ENCODE measurements at regions of chr12 and their contacts with region 1.

Region 1: GRCh38 chr12:123580772-123581171 is 3.6 kb upstream of the TMED2 start:
- DNase-seq: no peak
- ATAC-seq: no peak
- H3K4me3 Mint-ChIP-seq: no peak overlapping the region
- H3K27ac Mint-ChIP-seq: no peak overlapping the region
- H3K4me1 Mint-ChIP-seq: peaks cover 18% of the 10 kb centered on the region
- H3K27me3 Mint-ChIP-seq: no peaks in the 10 kb centered on the region

Region 2: GRCh38 chr12:123043536-123044001 is 537.2 kb before region 1 on chr12:
- CTCF ChIA-PET with region 1: interaction called, 3 read pairs
- POLR2A ChIA-PET with region 1: no interaction called
- intact Hi-C with region 1: loop called in 1 of 2 experiments (anchors 2 kb)
- DNase-seq: peak; percentile 89
- ATAC-seq: peak; percentile 97
- H3K4me3 Mint-ChIP-seq: no peak overlapping the region
- H3K27ac Mint-ChIP-seq: peak overlapping the region; percentile 47
- H3K4me1 Mint-ChIP-seq: peaks cover 28% of the 10 kb centered on the region
- H3K27me3 Mint-ChIP-seq: no peaks in the 10 kb centered on the region

Region 3: GRCh38 chr12:123427036-123427769 is 153.6 kb before region 1 on chr12:
- CTCF ChIA-PET with region 1: interaction called, 4 read pairs
- POLR2A ChIA-PET with region 1: no interaction called
- intact Hi-C with region 1: loop called in 1 of 2 experiments (anchors 5 kb)
- DNase-seq: peak; percentile 53
- ATAC-seq: peak; percentile 79
- H3K4me3 Mint-ChIP-seq: peak overlapping the region; percentile 40
- H3K27ac Mint-ChIP-seq: peak overlapping the region; percentile 84
- H3K4me1 Mint-ChIP-seq: peaks cover 35% of the 10 kb centered on the region
- H3K27me3 Mint-ChIP-seq: no peaks in the 10 kb centered on the region

Region 4: GRCh38 chr12:123533672-123534643 is 46.8 kb before region 1 on chr12 and contains the start of gene RILPL1:
- CTCF ChIA-PET with region 1: interaction called, 5 read pairs
- POLR2A ChIA-PET with region 1: no interaction called
- intact Hi-C with region 1: loop called (anchors 1 to 5 kb)
- DNase-seq: peak; percentile 63
- ATAC-seq: peak; percentile 64
- H3K4me3 Mint-ChIP-seq: peak within 1 kb of the TSS; percentile 78
- H3K27ac Mint-ChIP-seq: peak within 1 kb of the TSS; percentile 74
- H3K4me1 Mint-ChIP-seq: peaks cover 23% of the 10 kb centered on the region
- H3K27me3 Mint-ChIP-seq: peaks cover 3% of the 10 kb centered on the region
- total RNA-seq, gene RILPL1: 4.7 to 5.3 TPM

Region 5: DNA sequence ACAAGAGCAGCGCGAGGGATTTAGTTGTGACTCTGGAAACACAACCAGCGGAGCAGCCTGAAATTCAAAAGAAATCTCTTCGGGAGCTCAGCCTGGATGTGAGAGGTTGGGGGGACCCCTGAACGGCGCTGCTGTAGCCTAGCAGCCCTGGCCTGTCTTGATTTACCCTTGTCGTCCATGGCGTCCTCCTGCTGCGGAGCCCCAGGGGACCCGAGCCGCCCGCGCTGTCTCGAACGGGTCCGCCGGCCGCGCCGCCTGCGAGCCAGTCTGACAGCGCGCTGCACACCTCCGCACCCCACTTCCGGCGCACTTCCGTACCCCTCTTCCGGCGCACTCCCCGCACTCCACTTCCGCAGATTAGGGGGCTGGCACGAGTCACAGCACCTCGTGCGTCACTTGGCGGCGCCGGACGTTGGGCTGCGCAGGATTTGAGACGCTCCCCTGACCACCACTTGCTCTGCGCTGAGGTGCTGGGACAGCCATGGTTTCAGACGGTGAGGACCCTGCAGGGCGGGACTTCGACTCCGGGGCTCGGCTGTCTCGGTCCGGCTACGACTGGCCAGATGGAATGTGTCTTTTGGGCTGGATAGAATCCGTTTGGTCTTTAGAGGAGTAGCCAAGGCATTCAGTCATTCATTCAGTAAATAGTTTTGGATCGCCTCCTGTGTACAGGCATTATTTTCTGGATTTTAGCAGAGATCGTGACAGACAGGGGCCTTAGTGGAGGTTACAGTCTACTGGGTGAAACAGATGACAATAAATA is 52.8 kb after region 1 on chr12 and contains the starts of genes EIF2B1 and GTF2H3:
- CTCF ChIA-PET with region 1: no interaction called
- POLR2A ChIA-PET with region 1: no interaction called
- intact Hi-C with region 1: loop called (anchors 1 kb)
- DNase-seq: peak; percentile 99
- ATAC-seq: peak; percentile 97
- H3K4me3 Mint-ChIP-seq: peak within 1 kb of the TSS; percentile 93
- H3K27ac Mint-ChIP-seq: peak within 1 kb of the TSS; percentile 96
- H3K4me1 Mint-ChIP-seq: peaks cover 19% of the 10 kb centered on the region
- H3K27me3 Mint-ChIP-seq: no peaks in the 10 kb centered on the region
- total RNA-seq, gene EIF2B1: 52.7 to 61.0 TPM
- total RNA-seq, gene GTF2H3: 60.4 to 77.1 TPM

Region 6: GRCh38 chr12:123972457-123973401 is 392.0 kb after region 1 on chr12 and contains the starts of genes CCDC92 and ZNF664:
- CTCF ChIA-PET with region 1: no interaction called
- POLR2A ChIA-PET with region 1: no interaction called
- intact Hi-C with region 1: loop called in 1 of 2 experiments (anchors 1 kb)
- DNase-seq: peak; percentile 98
- ATAC-seq: peak; percentile 87
- H3K4me3 Mint-ChIP-seq: peak within 1 kb of the TSS; percentile 87
- H3K27ac Mint-ChIP-seq: peak within 1 kb of the TSS; percentile 89
- H3K4me1 Mint-ChIP-seq: peaks cover 48% of the 10 kb centered on the region
- H3K27me3 Mint-ChIP-seq: no peaks in the 10 kb centered on the region
- total RNA-seq, gene CCDC92: 8.7 to 11.0 TPM
- total RNA-seq, gene ZNF664: 46.4 to 48.3 TPM

Measured in activated CD4-positive, alpha-beta T cell treated with anti-CD3 and anti-CD28 coated beads for 36 hours (primary cell).